Dorsolateral prefrontal cortex (tissue), 120 donors: ENCODE measurements at regions of chr3 and their contacts with region 1.

Region 1: GRCh38 chr3:48685602-48686511 is at the start of gene NCKIPSD:
- DNase-seq: peak; percentile 77 to 90 (median 86)
- H3K4me3 ChIP-seq: peak within 1 kb of the TSS; percentile 70 to 100 (median 95)
- H3K27ac ChIP-seq: peak within 1 kb of the TSS in 57 of 59 donors; percentile 15 to 97 (median 87)
- H3K27me3 ChIP-seq: no peaks in the 10 kb centered on the region
- CTCF ChIP-seq: peak; percentile 54 to 99 (median 92)
- total RNA-seq, gene NCKIPSD: 66.3 to 147 (median 103) TPM

Region 2: GRCh38 chr3:48663415-48664312 is 22.2 kb before region 1 on chr3:
- intact Hi-C with region 1: loop called in 1 of 2 experiments (anchors 1 kb)
- DNase-seq: peak; percentile 90 to 98 (median 97)
- H3K4me3 ChIP-seq: peak overlapping the region; percentile 48 to 89 (median 71)
- H3K27ac ChIP-seq: peak overlapping the region; percentile 11 to 96 (median 88)
- H3K27me3 ChIP-seq: peaks cover 0 to 5% (median 0%) of the 10 kb centered on the region in 45 donors
- CTCF ChIP-seq: peak; percentile 44 to 93 (median 80)

Region 3: GRCh38 chr3:48739955-48740823 is 54.3 kb after region 1 on chr3:
- intact Hi-C with region 1: loop called (anchors 5 kb)
- DNase-seq: peak; percentile 88 to 94 (median 92)
- H3K4me3 ChIP-seq: peak overlapping the region in 43 of 59 donors; percentile 0 to 46 (median 21)
- H3K27ac ChIP-seq: peak overlapping the region; percentile 42 to 100 (median 94)
- H3K27me3 ChIP-seq: no peaks in the 10 kb centered on the region
- CTCF ChIP-seq: peak; percentile 53 to 93 (median 85)

Region 4: GRCh38 chr3:48765376-48765775 is 79.5 kb after region 1 on chr3:
- intact Hi-C with region 1: loop called in 1 of 2 experiments (anchors 5 kb)
- DNase-seq: peak in 1 of 10 donors; percentile 53
- H3K4me3 ChIP-seq: no peak overlapping the region
- H3K27ac ChIP-seq: peak overlapping the region in 20 of 59 donors; percentile 1 to 77 (median 38)
- H3K27me3 ChIP-seq: no peaks in the 10 kb centered on the region
- CTCF ChIP-seq: peak in 44 of 56 donors; percentile 14 to 67 (median 39)